ENCODE measurements at regions of chr19 and their contacts with region 1.

Region 1: GRCh38 chr19:20051841-20052768 is 12.8 kb upstream of the ZNF682 start:
- DNase-seq: peak; percentile 22 to 72 (median 48)
- ATAC-seq: peak; percentile 94 to 97
- H3K4me3 Mint-ChIP-seq: peak overlapping the region; percentile 94 to 100 (median 98)
- H3K27ac Mint-ChIP-seq: peak overlapping the region; percentile 84 to 97 (median 94)
- H3K4me1 Mint-ChIP-seq: peaks cover 3 to 15% (median 13%) of the 10 kb centered on the region in 4 donors
- H3K27me3 Mint-ChIP-seq: peaks cover 0 to 2% (median 1%) of the 10 kb centered on the region in 5 donors

Region 2: DNA sequence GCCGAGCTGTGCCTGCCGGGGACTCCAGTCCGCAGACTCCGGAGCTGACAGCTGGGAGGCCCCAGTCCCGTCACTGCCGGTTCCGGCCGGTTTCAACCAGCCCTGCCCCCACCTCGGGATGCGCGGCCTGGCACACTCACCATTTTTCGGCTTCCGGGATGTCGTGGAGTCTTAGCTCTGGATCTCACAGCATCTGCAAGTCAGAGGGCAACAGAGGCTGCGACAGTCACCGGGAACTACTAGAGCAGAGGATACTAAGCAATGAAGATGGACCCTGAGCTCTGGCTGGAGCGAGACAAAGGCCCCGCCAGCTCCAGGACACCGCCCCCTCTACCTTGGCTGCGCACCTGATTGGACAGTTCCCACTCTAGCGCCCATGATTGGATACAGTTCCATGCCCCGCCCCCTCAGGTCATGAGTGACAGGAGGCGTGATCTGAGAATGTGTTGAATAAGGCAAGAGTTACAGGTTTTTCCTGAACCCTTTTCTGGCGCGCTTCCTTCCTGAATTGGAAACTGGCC is 12.8 kb before region 1 on chr19 and contains the start of gene ZNF682:
- POLR2A ChIA-PET with region 1: interaction called, 37 read pairs
- DNase-seq: peak; percentile 86 to 98 (median 94)
- ATAC-seq: peak; percentile 98
- H3K4me3 Mint-ChIP-seq: peak within 1 kb of the TSS; percentile 90 to 99 (median 96)
- H3K27ac Mint-ChIP-seq: peak within 1 kb of the TSS; percentile 87 to 99 (median 96)
- H3K4me1 Mint-ChIP-seq: peaks cover 7 to 26% (median 20%) of the 10 kb centered on the region in 4 donors
- H3K27me3 Mint-ChIP-seq: peaks cover 0 to 4% (median 1%) of the 10 kb centered on the region in 5 donors
- polyA plus RNA-seq, gene ZNF682: 2.8 to 5.9 (median 3.4) TPM

Region 3: DNA sequence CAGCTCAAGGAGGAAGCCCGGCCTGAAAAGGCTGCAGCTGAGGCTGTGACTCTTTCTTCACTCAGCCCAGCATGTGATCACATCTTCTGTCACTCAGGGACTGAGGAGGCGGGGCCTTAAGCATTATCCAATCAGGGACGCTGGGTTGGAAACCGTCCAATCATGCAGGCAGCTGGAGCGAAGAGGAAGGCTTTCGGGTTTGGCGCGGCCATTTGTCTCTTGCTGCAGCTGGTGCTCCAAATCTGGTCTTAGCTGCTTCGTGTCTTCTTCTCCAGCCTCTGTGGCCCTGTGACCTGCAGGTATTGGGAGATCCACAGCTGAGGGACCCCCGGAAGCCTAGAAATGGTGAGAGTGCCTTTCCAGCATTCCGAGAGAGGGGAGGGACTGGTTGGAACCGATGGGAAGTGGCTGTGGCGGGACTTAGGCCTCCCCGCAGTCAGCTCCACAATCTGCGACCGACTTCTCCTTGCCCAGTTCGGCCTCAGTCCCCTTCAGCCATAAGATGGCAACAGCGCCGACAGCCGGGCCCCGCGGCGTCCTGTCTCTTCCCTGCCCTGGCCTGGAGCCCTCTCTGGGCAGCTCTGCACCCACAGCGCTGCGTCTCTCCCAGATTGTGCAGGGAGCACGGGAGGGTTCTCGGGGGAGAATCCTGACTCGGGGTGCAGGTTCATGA is 25.8 kb after region 1 on chr19 and contains the start of gene ZNF90:
- POLR2A ChIA-PET with region 1: interaction called, 16 read pairs
- DNase-seq: peak; percentile 69 to 96 (median 86)
- ATAC-seq: peak; percentile 99
- H3K4me3 Mint-ChIP-seq: peak within 1 kb of the TSS; percentile 85 to 94 (median 90)
- H3K27ac Mint-ChIP-seq: peak within 1 kb of the TSS in 9 of 10 donors; percentile 22 to 86 (median 69)
- H3K4me1 Mint-ChIP-seq: peaks cover 6 to 19% (median 17%) of the 10 kb centered on the region in 4 donors
- H3K27me3 Mint-ChIP-seq: no peaks in the 10 kb centered on the region
- polyA plus RNA-seq, gene ZNF90: 0.68 to 2.7 (median 2.1) TPM

Region 4: GRCh38 chr19:20167020-20167644 is 115.0 kb after region 1 on chr19 and contains the start of gene ZNF486:
- POLR2A ChIA-PET with region 1: interaction called, 17 read pairs
- DNase-seq: peak; percentile 77 to 98 (median 92)
- ATAC-seq: peak; percentile 95 to 97
- H3K4me3 Mint-ChIP-seq: peak within 1 kb of the TSS; percentile 93 to 99 (median 97)
- H3K27ac Mint-ChIP-seq: peak within 1 kb of the TSS; percentile 79 to 98 (median 93)
- H3K4me1 Mint-ChIP-seq: peaks cover 27 to 59% (median 36%) of the 10 kb centered on the region in 4 donors
- H3K27me3 Mint-ChIP-seq: no peaks in the 10 kb centered on the region
- polyA plus RNA-seq, gene ZNF486: 2.3 to 6.9 (median 4.0) TPM

Region 5: DNA sequence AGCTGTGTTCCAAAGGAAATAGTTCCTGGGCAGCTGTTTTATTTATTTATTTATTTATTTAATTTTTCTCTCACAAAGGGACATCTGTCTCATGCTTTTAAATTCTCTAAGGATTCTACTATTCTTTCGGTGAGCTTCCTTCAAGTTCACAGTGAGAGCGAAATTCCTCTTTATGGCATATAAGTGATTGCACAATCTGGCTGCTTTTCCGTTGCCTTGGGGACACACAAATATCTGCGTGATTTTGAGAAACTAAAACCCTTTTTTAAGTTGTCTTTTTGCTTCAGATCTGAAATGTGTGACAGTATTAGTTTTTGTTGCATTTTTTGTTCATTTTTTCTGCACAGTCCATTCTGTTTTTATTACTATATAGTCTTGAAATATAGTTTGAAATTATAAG is 134.1 kb after region 1 on chr19:
- POLR2A ChIA-PET with region 1: no interaction called
- DNase-seq: no peak
- ATAC-seq: no peak
- H3K4me3 Mint-ChIP-seq: no peak overlapping the region
- H3K27ac Mint-ChIP-seq: no peak overlapping the region
- H3K4me1 Mint-ChIP-seq: no peaks in the 10 kb centered on the region
- H3K27me3 Mint-ChIP-seq: no peaks in the 10 kb centered on the region

Measured in naive thymus-derived CD8-positive, alpha-beta T cell (primary cell).